Activated CD4-positive, alpha-beta T cell treated with anti-CD3 and anti-CD28 coated beads for 36 hours (primary cell): ENCODE measurements at regions of chr1 and their contacts with region 1.

Region 1: GRCh38 chr1:33055210-33056008 is 18.7 kb upstream of the AK2 start:
- DNase-seq: peak; percentile 45
- ATAC-seq: peak; percentile 77
- H3K4me3 Mint-ChIP-seq: no peak overlapping the region
- H3K27ac Mint-ChIP-seq: no peak overlapping the region
- H3K4me1 Mint-ChIP-seq: peaks cover 5% of the 10 kb centered on the region
- H3K27me3 Mint-ChIP-seq: peaks cover 5% of the 10 kb centered on the region

Region 2: DNA sequence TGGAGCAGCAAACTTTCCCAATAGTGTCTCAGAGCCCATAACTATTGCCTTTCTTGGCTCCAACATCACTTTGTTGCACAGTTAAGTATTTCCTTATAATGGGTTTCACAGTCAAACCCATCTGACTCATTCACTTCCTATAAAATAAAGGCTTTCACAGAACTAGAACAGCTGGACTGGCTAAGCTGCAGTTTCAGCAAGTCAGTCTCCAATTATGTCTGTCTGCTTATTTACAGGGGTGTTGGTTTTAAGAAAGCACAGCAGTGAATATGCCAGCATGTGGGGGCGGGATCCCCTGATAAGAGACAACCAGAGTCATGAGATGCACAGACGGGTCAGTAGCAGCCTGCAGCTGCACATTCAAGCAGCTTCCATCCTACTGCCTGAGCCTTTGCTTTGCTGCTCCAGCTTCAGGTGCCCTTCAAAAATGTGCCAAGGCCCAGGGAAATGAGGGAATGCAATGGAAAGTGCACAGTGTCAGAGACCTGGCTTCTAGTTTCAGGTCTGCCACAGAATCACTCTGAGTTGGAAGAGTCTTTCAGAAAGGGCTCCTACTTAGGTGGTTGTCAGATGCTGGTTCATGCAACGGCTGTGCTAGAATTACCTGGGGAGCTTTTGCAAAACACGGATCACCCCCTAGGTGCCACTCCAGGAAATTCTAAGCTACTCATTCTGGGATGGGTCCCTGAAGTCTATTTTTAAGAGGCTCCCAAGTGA is 115.6 kb before region 1 on chr1:
- CTCF ChIA-PET with region 1: interaction called, 68 read pairs
- POLR2A ChIA-PET with region 1: no interaction called
- intact Hi-C with region 1: no loop called
- DNase-seq: peak; percentile 54
- ATAC-seq: peak; percentile 73
- H3K4me3 Mint-ChIP-seq: no peak overlapping the region
- H3K27ac Mint-ChIP-seq: peak overlapping the region; percentile 45
- H3K4me1 Mint-ChIP-seq: peaks cover 29% of the 10 kb centered on the region
- H3K27me3 Mint-ChIP-seq: no peaks in the 10 kb centered on the region